ENCODE measurements at regions of chr16 and their contacts with region 1.

Region 1: GRCh38 chr16:12609937-12610699 is 193.6 kb downstream of the CPPED1 start:
- DNase-seq: no peak
- H3K4me3 ChIP-seq: no peak overlapping the region
- H3K27ac ChIP-seq: no peak overlapping the region
- H3K4me1 ChIP-seq: no peaks in the 10 kb centered on the region
- H3K27me3 ChIP-seq: no peaks in the 10 kb centered on the region
- CTCF ChIP-seq: no peak
- POLR2A ChIP-seq: no peak

Region 2: DNA sequence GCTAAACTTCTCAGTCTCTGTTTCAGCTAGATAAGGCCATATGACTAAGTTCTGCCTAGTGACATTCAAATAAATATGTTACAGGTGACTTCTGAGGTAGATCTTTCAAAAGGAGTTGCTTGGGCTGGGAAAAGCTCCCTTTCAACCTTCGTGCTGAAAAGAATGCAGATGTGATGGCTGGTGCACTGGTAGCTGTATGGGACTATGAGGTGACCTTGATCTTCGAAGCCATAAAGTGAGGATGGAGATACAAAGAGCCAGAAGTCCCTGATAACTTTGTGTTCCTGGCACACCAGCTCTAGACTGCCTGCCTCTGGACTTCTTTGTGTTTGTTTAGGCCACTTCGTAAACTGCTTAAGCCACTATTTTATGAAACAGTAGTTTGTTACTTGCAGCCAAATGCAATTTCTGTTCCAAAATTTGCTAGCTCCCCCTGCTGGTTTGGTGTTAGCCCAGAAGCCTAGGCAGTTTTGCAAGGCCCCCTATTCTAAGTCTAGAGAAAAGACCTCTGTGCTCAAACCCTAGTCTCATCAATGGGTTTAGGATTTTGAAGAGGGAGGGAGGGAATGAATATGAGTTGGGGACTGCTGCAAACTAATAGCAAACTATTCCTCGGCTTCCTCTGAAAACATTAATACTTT is 1286.5 kb after region 1 on chr16:
- intact Hi-C with region 1: loop called (anchors 10 kb)
- DNase-seq: no peak
- H3K4me3 ChIP-seq: no peak overlapping the region
- H3K27ac ChIP-seq: no peak overlapping the region
- H3K4me1 ChIP-seq: no peaks in the 10 kb centered on the region
- H3K27me3 ChIP-seq: peaks cover 0 to 3% of the 10 kb centered on the region in 2 donors
- CTCF ChIP-seq: no peak
- POLR2A ChIP-seq: no peak

Measured in breast epithelium (tissue), 4 donors.